ENCODE measurements at regions of chr14 and their contacts with region 1.

Region 1: DNA sequence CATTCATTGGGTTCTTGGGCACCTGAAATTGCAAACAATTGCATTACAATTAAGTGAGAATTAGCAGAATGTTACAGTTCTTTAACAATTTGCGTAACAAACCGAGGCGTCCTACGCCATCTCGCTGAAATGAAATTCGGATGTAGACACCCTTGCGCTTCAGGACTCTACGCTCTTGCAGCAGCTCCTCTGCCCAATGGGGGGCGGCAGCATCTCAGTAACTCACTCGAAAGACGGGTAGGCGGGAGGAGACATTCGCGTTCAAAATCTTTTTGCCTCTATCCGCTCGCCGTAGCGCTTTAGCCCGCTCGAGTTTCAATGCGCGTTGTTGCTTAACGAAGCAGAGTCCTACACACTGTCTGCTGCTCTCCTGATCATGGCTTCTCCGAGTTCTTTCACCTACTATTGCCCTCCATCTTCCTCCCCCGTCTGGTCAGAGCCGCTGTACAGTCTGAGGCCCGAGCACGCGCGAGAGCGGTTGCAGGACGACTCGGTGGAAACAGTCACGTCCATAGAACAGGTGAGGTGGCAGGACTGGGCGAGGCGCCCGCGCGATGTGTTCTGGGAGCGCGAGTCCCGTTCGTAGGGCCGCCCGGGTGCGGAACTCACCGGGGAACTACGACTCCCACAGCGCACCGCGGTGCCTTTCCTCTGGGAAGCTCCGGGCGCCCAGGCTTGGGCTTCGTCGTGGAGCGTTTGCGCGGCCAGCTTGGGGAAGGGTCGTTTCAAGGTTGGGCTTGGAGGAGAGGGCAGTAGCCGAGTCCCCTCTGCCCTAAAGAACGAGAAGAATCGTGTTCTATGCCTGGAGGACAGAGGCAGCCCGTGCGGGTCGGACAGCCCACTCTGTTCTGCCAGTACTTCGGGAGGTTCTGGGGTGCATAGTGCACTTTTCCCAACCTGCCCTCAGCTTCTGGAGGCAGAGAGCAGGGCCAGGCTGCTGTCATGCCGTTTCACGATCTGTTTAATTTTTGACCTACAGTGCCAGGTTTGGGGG is at the start of gene FNTB:
- DNase-seq: peak; percentile 91 to 99 (median 96)

Region 2: DNA sequence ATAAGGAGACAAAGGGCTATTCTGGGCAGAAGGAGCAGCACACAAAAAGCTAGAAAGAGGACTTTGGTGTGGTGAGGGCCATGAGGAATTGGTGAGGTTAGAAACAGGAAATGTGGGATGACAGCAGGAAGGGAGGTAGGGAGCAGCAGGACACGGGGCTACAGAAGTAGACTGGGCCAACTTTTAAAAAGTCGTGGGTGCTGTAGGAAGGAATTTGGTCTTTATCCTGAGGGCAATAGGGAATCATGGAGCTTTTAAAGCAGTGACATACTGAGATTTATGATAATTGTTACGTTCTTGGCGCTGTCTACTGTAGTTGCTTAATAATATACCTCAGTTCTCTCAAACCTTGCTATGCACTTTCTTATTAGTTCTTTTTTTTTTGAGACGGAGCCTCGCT is 80.9 kb before region 1 on chr14:
- intact Hi-C with region 1: no loop called
- DNase-seq: no peak

Region 3: DNA sequence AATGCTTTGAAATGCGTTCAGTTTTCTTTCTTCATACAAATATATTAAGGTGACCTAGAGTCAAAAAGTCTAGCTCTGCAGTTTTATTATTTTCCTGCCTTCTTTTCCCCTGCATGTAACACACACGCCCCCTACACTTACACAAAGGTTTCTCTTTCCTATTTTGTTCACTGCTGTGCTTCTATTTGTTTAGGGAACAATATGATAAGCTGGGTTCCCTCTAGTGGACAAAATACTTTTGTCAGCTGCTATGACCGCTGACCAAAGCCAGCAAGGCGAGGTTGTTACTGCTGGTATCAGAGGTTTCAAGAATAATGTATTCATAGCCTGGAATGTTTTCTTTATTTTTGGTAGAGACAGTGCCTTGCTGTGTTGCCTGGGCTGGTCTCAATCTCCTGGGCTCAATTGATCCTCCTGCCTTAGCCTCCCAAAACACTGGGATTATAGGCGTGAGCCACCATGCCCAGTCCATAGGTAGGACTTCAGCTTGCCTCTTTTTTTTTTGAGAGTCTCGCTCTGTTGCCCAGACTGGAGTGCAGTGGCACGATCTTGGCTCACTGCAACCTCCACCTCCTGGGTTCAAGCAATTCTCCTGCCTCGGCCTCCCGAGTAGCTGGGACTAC is 33.2 kb after region 1 on chr14:
- intact Hi-C with region 1: loop called (anchors 5 kb)
- DNase-seq: peak in 22 of 42 donors; percentile 15 to 75 (median 44)

Region 4: DNA sequence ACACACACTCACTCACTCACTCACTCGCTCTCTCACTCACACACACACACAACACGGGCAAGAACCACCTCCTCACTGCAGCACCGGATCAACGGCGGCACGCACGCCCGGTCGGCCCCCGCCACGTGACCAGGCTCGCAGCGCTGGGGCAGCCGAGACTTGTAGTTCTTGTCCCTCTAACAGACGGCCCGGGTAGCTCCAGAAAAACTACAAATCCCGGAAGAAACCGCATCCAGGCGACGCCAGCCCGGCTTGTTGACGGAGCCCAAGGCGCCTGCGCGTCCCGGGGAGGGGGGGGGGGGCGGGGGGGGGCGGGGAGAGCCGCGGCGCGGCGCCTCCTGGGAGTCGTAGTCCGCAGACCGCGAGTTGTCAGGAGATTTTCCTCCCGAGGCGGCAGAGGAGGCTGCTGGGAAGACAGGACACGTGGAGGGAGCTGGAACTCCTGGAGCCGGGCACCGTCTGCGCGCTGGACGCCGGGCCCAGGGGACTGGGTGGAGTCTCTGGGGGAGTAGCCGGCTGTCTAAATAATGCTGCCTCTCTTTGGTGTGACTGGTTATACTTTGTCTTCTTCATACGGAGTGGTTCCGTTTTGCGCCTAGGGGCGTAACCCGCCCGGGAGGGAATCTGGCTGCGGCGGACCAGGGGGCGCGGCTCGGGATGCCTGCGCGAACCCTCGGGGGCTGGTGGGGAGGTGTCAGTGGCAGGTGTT is 115.7 kb after region 1 on chr14 and contains the start of gene MAX:
- intact Hi-C with region 1: loop called (anchors 10 kb)
- DNase-seq: peak; percentile 98 to 100 (median 99)